Pancreas (tissue), 10 donors: ENCODE measurements at regions of chr5 and their contacts with region 1.

Region 1: GRCh38 chr5:68252673-68253623 is 37.4 kb downstream of the PIK3R1 start:
- DNase-seq: peak in 4 of 6 donors; percentile 32 to 63 (median 50)
- ATAC-seq: peak; percentile 84 to 94 (median 93)
- H3K4me3 ChIP-seq: no peak overlapping the region
- H3K27ac ChIP-seq: no peak overlapping the region
- H3K4me1 ChIP-seq: peaks cover 0 to 21% (median 0%) of the 10 kb centered on the region in 3 donors
- H3K27me3 ChIP-seq: no peaks in the 10 kb centered on the region
- CTCF ChIP-seq: peak in 3 of 4 donors; percentile 43 to 52 (median 45)

Region 2: DNA sequence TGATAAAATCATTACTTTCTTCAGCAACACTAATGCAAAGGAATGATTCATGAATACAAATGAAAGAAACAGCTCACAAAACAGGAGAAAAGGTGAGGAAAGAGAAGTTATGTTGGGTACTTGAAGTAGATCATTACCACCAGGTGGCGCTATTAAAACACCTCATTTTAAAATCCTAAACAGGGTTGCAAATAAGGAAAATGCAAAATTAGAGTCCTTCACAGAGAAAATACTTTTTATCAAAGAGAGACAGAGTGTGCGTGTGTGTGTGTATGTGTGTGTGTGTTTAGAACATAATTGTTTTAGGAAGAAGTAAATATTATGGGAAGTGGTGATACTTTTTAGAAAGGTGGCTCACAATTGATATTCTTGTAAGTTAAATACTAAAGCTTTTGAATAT is 1006.8 kb before region 1 on chr5:
- intact Hi-C with region 1: loop called in 1 of 3 experiments (anchors 10 kb)
- DNase-seq: no peak
- ATAC-seq: peak; percentile 56 to 81 (median 80)
- H3K4me3 ChIP-seq: no peak overlapping the region
- H3K27ac ChIP-seq: no peak overlapping the region
- H3K4me1 ChIP-seq: peaks cover 0 to 8% (median 0%) of the 10 kb centered on the region in 3 donors
- H3K27me3 ChIP-seq: no peaks in the 10 kb centered on the region
- CTCF ChIP-seq: peak; percentile 48 to 70 (median 56)